ENCODE measurements at regions of chr14 and their contacts with region 1.

Region 1: GRCh38 chr14:20343092-20343861 is at the start of gene PARP2:
- DNase-seq: peak; percentile 96
- H3K4me3 Mint-ChIP-seq: peak within 1 kb of the TSS; percentile 89
- H3K27ac Mint-ChIP-seq: peak within 1 kb of the TSS; percentile 84
- H3K4me1 Mint-ChIP-seq: peaks cover 23% of the 10 kb centered on the region
- H3K27me3 Mint-ChIP-seq: peaks cover 3% of the 10 kb centered on the region
- total RNA-seq, gene PARP2: 27.1 to 28.7 TPM

Region 2: DNA sequence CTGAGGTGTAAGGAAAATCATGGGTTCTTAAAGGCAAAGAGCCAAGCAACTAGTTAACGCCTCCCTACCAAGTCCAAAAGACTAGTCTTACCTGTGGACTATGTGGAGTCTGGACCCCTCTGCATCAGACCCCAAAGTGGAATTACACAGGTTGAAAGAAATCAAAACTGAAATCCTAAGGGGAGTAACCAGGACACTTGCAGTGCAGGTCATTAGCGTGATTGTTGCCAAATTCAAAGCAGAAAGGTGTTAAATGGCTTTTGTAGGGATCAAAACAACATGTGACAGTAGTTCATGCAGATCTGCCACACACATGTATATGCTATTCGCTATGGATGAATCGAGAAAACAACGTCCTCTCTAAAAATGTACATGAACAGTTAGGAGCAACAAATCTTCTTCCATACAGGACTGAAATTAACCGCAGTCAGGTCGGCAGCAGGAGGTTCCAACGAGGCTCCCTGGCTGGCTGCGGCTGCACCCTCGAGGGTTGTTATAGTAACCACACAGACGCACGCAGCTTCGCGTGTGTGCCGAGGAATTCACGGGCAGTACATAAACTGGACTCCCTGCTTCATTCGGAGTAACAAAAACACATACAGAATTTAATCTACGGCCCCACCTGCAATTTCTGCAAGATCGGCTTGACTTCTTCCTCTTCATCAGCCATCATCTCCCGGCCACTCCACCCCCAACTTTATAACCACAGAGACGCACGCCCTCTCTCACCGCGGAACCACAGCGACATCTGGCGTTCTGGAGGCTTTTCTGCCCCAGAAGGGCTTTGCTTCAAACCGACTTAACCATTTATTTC is 37.8 kb before region 1 on chr14 and contains the start of gene TTC5:
- CTCF ChIA-PET with region 1: interaction called, 5 read pairs
- POLR2A ChIA-PET with region 1: interaction called, 10 read pairs
- DNase-seq: peak; percentile 91
- H3K4me3 Mint-ChIP-seq: peak within 1 kb of the TSS; percentile 83
- H3K27ac Mint-ChIP-seq: peak within 1 kb of the TSS; percentile 67
- H3K4me1 Mint-ChIP-seq: peaks cover 32% of the 10 kb centered on the region
- H3K27me3 Mint-ChIP-seq: no peaks in the 10 kb centered on the region
- total RNA-seq, gene TTC5: 20.5 to 21.2 TPM

Region 3: GRCh38 chr14:20332788-20333493 is 10.3 kb before region 1 on chr14 and contains the start of gene CCNB1IP1:
- CTCF ChIA-PET with region 1: interaction called, 108 read pairs
- POLR2A ChIA-PET with region 1: interaction called, 144 read pairs
- DNase-seq: peak; percentile 52
- H3K4me3 Mint-ChIP-seq: peak within 1 kb of the TSS; percentile 99
- H3K27ac Mint-ChIP-seq: peak within 1 kb of the TSS; percentile 91
- H3K4me1 Mint-ChIP-seq: peaks cover 60% of the 10 kb centered on the region
- H3K27me3 Mint-ChIP-seq: peaks cover 4% of the 10 kb centered on the region
- total RNA-seq, gene CCNB1IP1: 39.3 to 43.4 TPM

Region 4: DNA sequence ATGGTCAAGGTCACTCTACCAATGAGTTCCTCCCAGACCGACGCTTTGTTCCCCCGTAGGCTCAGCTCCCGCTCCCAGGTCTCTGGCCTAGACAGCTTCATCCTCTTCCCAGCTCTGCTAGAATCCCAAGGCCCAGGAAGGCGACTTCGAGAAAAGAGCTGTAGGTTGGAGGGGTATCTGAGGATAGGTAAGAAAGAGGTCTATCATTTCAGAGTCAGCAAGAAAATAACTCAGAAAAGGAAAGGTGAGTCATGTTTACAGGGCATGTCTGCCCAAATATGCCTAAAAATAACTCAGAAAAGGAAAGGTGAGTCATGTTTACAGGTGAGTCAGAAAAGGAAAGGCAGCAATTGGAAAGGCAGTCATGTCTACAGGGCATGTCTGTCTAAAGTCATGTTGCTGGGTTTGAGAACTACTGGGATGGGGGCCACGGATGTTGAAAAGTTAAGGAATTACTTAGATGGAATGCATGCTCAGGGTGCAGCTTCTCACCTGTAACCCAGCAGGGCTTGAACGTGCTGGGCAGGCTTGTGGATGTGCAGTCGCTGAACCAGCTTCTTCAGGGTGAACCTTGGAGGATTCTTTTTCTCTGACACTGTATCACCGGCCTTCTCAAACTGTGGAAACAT is 57.8 kb after region 1 on chr14:
- CTCF ChIA-PET with region 1: interaction called, 4 read pairs
- POLR2A ChIA-PET with region 1: interaction called, 14 read pairs
- DNase-seq: peak; percentile 22
- H3K4me3 Mint-ChIP-seq: peak overlapping the region; percentile 61
- H3K27ac Mint-ChIP-seq: peak overlapping the region; percentile 91
- H3K4me1 Mint-ChIP-seq: peaks cover 42% of the 10 kb centered on the region
- H3K27me3 Mint-ChIP-seq: no peaks in the 10 kb centered on the region

Region 5: GRCh38 chr14:20454516-20455354 is 111.5 kb after region 1 on chr14 and contains the starts of genes APEX1 and OSGEP:
- CTCF ChIA-PET with region 1: interaction called, 16 read pairs
- POLR2A ChIA-PET with region 1: interaction called, 56 read pairs
- DNase-seq: peak; percentile 99
- H3K4me3 Mint-ChIP-seq: no peak within 1 kb of the TSS
- H3K27ac Mint-ChIP-seq: no peak within 1 kb of the TSS
- H3K4me1 Mint-ChIP-seq: peaks cover 33% of the 10 kb centered on the region
- H3K27me3 Mint-ChIP-seq: no peaks in the 10 kb centered on the region
- total RNA-seq, gene APEX1: 91.9 to 103 TPM
- total RNA-seq, gene OSGEP: 35.8 to 40.3 TPM

Region 6: DNA sequence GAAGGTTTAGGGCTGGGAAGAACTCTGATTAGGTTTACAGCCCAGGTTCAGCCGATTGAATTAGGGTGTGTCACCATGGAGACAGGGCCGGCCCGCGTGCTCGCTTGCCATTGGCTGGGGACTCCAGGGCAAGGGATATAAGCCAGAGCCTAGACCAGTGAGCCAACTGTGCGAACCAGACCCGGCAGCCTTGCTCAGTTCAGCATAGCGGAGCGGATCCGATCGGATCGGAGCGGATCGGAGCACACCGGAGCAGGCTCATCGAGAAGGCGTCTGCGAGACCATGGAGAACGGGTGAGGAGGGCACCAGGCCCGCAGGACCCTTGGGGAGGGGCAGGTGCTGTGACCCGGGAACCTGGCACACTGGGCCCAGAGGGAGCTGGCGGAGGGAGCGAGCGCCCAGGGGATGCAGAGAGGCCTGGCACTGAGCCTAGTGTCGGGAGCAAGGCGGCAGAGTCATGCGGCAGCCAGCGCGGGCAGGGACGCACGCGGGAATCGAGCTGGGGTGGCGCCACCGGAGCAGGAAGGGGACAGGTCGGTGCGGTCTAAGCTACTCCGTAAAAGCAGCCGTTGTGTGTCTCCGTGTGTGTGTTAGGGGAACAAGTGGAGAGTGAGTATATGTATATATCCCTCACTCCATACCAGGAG is 126.1 kb after region 1 on chr14 and contains the start of gene PNP:
- CTCF ChIA-PET with region 1: interaction called, 4 read pairs
- POLR2A ChIA-PET with region 1: interaction called, 53 read pairs
- DNase-seq: peak; percentile 91
- H3K4me3 Mint-ChIP-seq: peak within 1 kb of the TSS; percentile 88
- H3K27ac Mint-ChIP-seq: peak within 1 kb of the TSS; percentile 91
- H3K4me1 Mint-ChIP-seq: peaks cover 42% of the 10 kb centered on the region
- H3K27me3 Mint-ChIP-seq: no peaks in the 10 kb centered on the region
- total RNA-seq, gene PNP: 207 to 210 TPM

Region 7: DNA sequence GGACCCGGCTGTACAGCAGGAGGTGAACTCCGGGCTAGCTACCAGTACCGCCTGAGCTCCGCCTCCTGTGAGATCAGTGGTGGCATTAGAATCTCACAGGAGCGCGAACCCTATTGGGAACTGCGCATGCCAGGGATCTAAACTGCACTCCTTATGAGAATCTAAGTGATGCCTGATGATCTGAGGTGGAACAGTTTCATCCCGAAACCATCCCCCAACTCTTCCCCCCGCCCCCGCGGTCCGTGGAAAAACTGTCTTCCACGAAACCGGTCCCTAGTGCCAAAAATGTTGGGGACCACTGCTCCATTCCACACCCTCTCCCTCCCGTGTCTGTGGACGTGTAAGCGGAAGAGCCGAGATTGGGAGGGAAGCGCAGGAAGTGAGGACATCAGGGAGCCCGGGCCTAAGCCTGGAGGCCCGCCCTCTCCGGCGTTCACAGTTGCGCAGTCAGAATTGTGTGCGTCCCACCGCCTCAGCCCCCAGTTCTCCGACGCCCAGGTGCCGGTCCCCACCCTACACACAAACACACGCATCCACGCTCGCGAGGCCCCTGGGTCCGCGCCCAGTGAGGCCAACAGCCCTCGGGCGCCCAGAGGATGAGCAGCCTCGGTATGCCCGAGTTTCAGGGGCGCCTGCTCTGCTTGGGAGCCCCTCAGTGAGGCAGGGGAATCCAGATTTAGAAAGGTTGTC is 339.3 kb after region 1 on chr14:
- CTCF ChIA-PET with region 1: interaction called, 7 read pairs
- POLR2A ChIA-PET with region 1: interaction called, 45 read pairs
- DNase-seq: peak; percentile 78
- H3K4me3 Mint-ChIP-seq: no peak overlapping the region
- H3K27ac Mint-ChIP-seq: no peak overlapping the region
- H3K4me1 Mint-ChIP-seq: peaks cover 13% of the 10 kb centered on the region
- H3K27me3 Mint-ChIP-seq: no peaks in the 10 kb centered on the region